B cell (primary cell): ENCODE measurements at regions of chrX and their contacts with region 1.

Region 1: DNA sequence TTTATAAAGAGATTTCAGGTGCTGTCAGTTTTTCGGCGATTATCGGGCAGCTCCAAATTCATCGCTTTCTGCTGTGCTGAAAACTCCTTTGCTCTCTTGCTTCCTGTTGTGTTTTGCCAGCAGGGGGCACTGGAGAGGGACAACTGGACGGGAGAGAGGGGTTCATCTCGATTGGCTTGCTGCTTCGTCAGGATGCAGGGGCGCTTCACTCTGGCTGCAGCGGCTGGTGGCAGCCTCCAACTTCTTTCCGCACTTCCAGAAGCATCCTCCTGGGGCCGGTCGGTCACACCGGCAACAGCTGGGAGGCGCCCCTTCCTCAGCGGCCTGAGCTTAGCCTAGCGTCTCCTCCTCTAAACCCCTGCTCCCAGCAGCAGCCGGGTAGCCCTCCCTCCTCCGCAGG is 29.5 kb downstream of the MSL3 start:
- DNase-seq: peak; percentile 68
- ATAC-seq: peak; percentile 58
- H3K4me3 ChIP-seq: peak overlapping the region in 3 of 5 experiments; percentile 14 to 24 (median 22)
- H3K4me3 Mint-ChIP-seq: peak overlapping the region; percentile 66
- H3K27ac ChIP-seq: no peak overlapping the region
- H3K27ac Mint-ChIP-seq: no peak overlapping the region
- H3K4me1 ChIP-seq: peaks cover 8 to 9% of the 10 kb centered on the region in 2 donors
- H3K4me1 Mint-ChIP-seq: peaks cover 19% of the 10 kb centered on the region
- H3K27me3 ChIP-seq: no peaks in the 10 kb centered on the region
- H3K27me3 Mint-ChIP-seq: no peaks in the 10 kb centered on the region
- CTCF ChIP-seq: peak; percentile 46

Region 2: GRCh38 chrX:11908371-11908770 is 120.8 kb after region 1 on chrX:
- CTCF ChIA-PET with region 1: interaction called, 7 read pairs
- POLR2A ChIA-PET with region 1: no interaction called
- intact Hi-C with region 1: loop called (anchors 1 kb)
- DNase-seq: peak; percentile 36
- ATAC-seq: no peak
- H3K4me3 ChIP-seq: no peak overlapping the region
- H3K4me3 Mint-ChIP-seq: no peak overlapping the region
- H3K27ac ChIP-seq: no peak overlapping the region
- H3K27ac Mint-ChIP-seq: no peak overlapping the region
- H3K4me1 ChIP-seq: no peaks in the 10 kb centered on the region
- H3K4me1 Mint-ChIP-seq: no peaks in the 10 kb centered on the region
- H3K27me3 ChIP-seq: no peaks in the 10 kb centered on the region
- H3K27me3 Mint-ChIP-seq: peaks cover 5% of the 10 kb centered on the region
- CTCF ChIP-seq: peak; percentile 28